OCI-LY7 (cell line): ENCODE measurements at regions of chr6 and their contacts with region 1.

Region 1: DNA sequence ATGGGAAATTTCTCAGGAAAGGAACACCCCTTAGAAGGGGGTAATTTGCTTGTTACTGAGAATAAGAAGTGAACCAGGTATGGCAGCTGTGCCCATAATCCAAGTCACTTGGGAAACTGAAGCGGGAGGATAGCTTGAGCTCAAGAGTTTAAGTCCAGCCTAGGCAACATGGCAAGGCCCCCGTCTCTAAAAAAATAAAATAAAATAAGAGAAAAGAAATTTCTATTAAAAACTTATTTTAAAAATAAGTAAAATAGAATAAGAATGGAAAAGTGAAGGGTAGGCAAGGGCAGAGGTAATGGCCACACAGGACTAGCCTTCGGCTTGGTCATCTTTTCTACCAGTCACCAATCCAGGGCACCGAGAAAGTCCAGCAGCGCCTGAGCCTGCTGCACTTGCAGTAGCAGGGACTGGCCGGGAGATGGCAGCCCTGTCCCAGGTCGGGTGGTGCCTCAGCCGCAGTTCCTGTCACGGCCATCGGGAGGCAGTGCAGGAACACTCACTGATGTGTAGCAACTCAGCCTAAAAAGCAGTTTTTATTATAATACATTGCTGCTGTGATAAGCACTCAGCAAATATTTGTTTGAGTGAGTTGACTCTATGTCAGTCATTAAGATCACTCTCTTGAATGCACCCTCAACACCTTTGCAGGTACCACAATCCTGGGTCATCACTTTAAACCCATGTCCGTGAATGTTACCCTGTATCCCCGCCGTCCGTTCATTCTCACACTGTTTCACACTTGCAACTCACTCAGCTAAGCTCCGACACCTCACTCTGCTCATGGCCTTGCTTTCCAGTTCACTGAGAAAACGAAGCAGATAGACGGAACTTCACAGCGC is 23.2 kb upstream of the GCM1 start:
- DNase-seq: peak; percentile 84
- H3K4me3 ChIP-seq: no peak overlapping the region
- H3K27ac ChIP-seq: no peak overlapping the region
- H3K4me1 ChIP-seq: peaks cover 6% of the 10 kb centered on the region
- CTCF ChIP-seq: peak; percentile 100

Region 2: DNA sequence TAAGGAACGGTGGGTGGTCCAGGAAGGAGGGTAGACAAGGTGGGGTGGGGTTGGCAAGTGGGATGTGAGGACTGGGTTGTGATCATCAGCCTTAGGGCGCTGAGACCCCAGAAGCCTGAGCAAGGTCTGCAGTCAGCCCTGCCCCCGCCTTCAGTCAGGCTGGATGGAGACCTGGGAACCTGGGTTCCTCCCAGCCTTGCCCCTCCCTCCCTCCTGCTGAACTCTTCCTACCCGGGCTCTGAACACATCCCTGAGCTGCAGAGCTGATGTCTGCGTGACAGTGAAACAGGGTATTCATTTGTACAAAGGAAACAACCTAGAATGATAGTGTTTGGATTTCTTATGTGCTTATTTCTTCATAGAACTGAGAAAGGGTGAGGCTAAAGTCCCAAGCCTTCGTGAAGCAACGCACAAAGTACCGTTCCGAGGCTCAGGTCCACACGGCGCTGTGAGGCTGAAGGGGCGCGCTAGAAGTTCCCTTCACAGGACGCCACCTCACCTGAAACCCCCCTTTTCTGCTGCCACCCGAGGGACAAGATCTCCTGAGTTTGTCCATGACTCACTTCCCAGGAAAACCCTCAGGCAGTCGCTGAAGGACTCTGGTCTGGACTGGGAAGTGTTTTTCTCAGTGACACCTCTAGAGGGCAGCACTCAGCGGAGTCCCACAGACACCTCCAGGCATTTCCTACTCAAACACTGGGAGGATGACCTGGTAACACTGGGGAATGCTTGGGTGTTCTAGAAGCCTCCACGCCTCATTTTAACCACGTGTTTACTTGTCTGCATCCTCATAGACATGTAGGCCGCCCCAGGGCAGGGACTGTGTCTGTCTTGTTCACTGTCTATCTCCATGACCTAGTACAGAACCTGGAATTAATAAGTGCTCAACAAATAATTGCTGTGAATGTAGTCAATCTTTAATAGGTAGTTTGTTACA is 332.4 kb before region 1 on chr6:
- CTCF ChIA-PET with region 1: no interaction called
- POLR2A ChIA-PET with region 1: no interaction called
- intact Hi-C with region 1: no loop called
- DNase-seq: peak; percentile 50
- H3K4me3 ChIP-seq: no peak overlapping the region
- H3K27ac ChIP-seq: no peak overlapping the region
- H3K4me1 ChIP-seq: no peaks in the 10 kb centered on the region
- CTCF ChIP-seq: peak; percentile 83

Region 3: GRCh38 chr6:53128842-53129241 is 43.0 kb before region 1 on chr6:
- CTCF ChIA-PET with region 1: no interaction called
- POLR2A ChIA-PET with region 1: no interaction called
- intact Hi-C with region 1: no loop called
- DNase-seq: no peak
- H3K4me3 ChIP-seq: no peak overlapping the region
- H3K27ac ChIP-seq: no peak overlapping the region
- H3K4me1 ChIP-seq: no peaks in the 10 kb centered on the region
- CTCF ChIP-seq: no peak

Region 4: GRCh38 chr6:53244958-53245357 is 73.1 kb after region 1 on chr6:
- CTCF ChIA-PET with region 1: no interaction called
- POLR2A ChIA-PET with region 1: interaction called, 3 read pairs
- intact Hi-C with region 1: loop called (anchors 5 kb)
- DNase-seq: peak; percentile 94
- H3K4me3 ChIP-seq: peak overlapping the region; percentile 24
- H3K27ac ChIP-seq: peak overlapping the region; percentile 61
- H3K4me1 ChIP-seq: peaks cover 40% of the 10 kb centered on the region
- CTCF ChIP-seq: no peak

Region 5: DNA sequence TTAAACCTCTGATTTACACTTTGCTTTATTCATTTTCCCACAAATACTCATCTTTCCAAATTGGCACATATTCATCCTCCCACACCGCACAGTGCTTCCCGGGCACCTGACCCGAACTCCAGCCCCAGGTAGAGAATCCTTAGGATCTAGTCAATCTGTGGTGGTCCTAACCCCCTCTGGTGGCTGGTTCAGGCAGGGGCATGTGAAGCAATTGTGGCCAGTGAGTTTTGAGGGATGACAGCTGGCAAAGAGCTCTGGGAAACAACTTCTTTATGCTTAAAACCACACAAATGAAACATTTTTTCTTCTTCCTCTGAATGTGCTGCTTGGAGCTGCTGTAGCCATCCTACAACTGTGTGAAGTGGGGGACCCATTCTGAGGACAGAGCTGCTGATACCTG is 122.3 kb after region 1 on chr6:
- CTCF ChIA-PET with region 1: interaction called, 4 read pairs
- POLR2A ChIA-PET with region 1: no interaction called
- intact Hi-C with region 1: loop called (anchors 1 kb)
- DNase-seq: peak; percentile 54
- H3K4me3 ChIP-seq: no peak overlapping the region
- H3K27ac ChIP-seq: no peak overlapping the region
- H3K4me1 ChIP-seq: peaks cover 16% of the 10 kb centered on the region
- CTCF ChIP-seq: peak; percentile 95

Region 6: DNA sequence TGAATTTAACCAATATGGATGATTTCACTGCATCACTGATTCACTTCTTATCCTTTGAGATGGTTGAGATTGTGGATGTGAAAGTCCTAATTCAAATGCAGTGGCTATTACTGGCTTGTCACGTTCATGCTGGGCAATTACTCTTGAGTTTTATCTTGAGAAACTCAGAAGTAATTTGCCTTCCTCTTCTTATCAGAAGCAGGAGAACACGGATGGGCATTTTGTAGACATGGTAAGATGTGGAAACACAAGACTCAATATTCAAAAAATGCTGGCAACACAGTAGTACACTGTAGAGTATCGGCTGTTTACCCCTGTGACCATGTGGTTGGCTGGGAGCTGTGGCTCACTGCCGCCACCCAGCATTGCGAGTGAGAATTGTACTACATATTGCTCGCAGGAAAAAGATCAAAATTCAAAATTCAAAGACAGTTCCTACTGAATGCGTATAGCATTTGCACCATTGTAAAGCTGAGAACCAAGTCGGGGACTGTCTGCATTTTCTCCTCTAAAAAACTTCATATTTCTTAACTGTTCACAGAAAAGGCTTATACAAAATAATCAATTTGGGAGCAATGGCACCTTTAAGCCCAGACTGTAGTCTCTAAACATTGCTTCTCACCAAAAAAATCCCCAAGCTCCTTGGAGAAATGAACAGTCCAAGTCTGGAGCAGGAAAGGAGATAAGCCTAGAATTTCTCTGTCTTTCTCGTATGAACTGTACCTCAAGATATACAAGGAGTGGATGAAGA is 238.9 kb after region 1 on chr6:
- CTCF ChIA-PET with region 1: no interaction called
- POLR2A ChIA-PET with region 1: interaction called, 3 read pairs
- intact Hi-C with region 1: loop called (anchors 1 kb)
- DNase-seq: peak; percentile 80
- H3K4me3 ChIP-seq: peak overlapping the region; percentile 19
- H3K27ac ChIP-seq: peak overlapping the region; percentile 39
- H3K4me1 ChIP-seq: peaks cover 17% of the 10 kb centered on the region
- CTCF ChIP-seq: peak; percentile 99

Region 7: DNA sequence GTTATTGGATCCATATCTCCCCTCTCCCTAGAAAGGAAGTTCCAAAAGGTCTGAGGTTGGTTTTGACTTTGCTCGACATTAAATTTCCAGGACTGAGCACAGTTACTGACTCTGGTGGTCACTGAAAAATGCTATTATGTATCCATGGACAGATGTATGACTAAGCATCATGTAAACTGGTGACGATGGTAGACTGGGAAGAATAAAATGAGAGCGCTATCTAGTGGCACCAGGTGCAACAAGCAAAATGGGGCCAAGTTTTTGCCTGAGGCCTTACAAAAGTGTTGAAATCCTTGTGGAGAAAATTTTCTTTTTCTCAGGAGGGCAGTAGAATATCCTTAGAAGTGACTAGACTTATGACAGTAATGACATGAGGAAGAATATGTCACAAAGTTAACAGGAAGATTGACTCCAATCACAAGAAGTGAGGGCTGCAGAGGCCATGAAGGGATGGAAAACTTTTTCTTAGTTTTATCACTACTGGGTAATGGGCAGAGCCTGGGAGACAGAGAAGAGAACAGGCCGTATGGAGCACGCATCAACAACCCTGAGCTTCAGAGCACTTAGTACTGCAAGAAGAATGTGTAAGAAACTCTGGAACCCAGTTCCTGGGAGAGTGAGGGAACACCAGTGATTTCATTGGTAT is 265.9 kb after region 1 on chr6:
- CTCF ChIA-PET with region 1: interaction called, 5 read pairs
- POLR2A ChIA-PET with region 1: interaction called, 3 read pairs
- intact Hi-C with region 1: loop called (anchors 1 kb)
- DNase-seq: peak; percentile 64
- H3K4me3 ChIP-seq: no peak overlapping the region
- H3K27ac ChIP-seq: no peak overlapping the region
- H3K4me1 ChIP-seq: no peaks in the 10 kb centered on the region
- CTCF ChIP-seq: peak; percentile 95

Region 8: GRCh38 chr6:53484476-53485280 is 312.9 kb after region 1 on chr6:
- CTCF ChIA-PET with region 1: interaction called, 11 read pairs
- POLR2A ChIA-PET with region 1: interaction called, 6 read pairs
- intact Hi-C with region 1: loop called (anchors 1 kb)
- DNase-seq: peak; percentile 79
- H3K4me3 ChIP-seq: no peak overlapping the region
- H3K27ac ChIP-seq: no peak overlapping the region
- H3K4me1 ChIP-seq: peaks cover 4% of the 10 kb centered on the region
- CTCF ChIP-seq: peak; percentile 100

Region 9: DNA sequence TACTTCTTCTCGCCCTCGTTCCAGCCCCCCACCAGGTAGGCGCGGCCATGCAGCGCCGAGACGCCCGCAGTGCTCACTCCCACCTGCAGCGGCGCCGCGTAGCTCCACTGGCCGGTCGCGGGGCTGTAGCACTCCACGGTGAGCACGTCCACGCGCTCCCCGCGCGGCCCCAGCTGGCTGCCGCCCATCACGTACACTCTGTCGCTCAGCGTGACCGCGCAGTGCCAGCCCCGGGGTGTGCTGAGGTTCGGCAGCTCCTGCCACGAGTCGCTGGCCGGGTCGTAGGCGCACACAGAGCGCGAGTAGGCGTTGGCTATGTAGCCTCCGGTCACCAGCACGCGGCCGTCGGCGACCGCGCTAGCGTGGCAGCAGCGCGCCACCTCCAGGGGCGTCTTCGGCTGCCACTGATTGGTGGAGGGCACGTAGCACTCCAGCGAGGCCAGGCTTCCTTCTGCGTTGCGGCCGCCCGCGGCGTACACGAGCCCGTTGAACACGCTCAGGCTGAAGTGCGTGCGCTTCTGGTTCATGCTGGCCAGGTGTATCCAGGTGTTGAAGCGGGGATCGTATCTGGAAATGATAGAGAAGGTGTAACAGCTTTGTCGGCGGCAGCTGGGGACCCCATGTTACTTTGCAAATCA is 480.1 kb after region 1 on chr6:
- CTCF ChIA-PET with region 1: no interaction called
- POLR2A ChIA-PET with region 1: no interaction called
- intact Hi-C with region 1: loop called (anchors 10 kb)
- DNase-seq: no peak
- H3K4me3 ChIP-seq: peak overlapping the region; percentile 50
- H3K27ac ChIP-seq: no peak overlapping the region
- H3K4me1 ChIP-seq: peaks cover 13% of the 10 kb centered on the region
- CTCF ChIP-seq: no peak